CD4-positive, alpha-beta memory T cell (primary cell): ENCODE measurements at regions of chr19 and their contacts with region 1.

Region 1: DNA sequence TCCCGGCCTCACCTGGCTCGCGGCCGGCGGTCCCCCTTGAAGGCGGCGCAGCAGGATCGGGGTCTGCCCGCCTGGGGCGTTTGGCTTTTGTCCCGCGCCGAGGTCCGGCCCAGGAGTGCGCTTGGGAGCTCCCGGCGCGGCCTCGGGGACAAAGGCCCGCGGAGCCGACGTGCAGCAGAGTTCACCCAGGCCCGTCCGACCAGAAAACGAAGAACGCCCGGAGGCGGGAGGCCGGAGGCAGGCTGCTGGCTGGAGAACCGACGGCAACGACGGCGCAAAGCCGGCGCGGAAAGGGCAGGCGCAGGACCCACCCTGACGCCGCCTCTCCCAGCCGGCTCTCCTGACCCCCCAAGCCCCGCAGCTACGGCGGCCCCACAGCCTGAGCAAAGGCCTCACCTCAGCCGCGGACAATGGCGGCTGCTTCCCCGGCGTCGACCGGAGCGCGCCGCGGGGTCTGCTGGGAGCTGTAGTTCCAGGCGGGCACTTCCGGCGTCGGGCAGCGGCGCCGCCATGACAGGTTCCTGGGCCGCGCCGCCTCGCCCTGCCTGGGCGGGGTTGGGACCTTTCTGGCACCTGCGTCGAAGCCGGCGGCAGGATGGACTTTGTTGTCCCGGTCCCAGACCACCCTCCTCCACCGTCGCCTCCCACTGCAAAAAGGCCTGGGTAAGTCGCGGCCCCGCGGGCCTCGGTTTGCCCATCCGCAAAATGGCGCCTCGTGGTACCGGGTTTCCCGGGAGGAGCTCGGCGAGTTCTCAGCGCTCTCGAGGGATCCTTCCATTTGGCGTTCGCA is at the start of gene ZNF606:
- DNase-seq: peak; percentile 83 to 89 (median 86)
- H3K4me3 ChIP-seq: peak within 1 kb of the TSS; percentile 93 to 98
- H3K4me3 Mint-ChIP-seq: peak within 1 kb of the TSS; percentile 76 to 87 (median 84)
- H3K27ac ChIP-seq: peak within 1 kb of the TSS; percentile 80
- H3K27ac Mint-ChIP-seq: peak within 1 kb of the TSS; percentile 78 to 93 (median 87)
- H3K4me1 ChIP-seq: peaks cover 22% of the 10 kb centered on the region
- H3K4me1 Mint-ChIP-seq: peaks cover 15 to 34% (median 26%) of the 10 kb centered on the region in 4 donors
- H3K27me3 ChIP-seq: no peaks in the 10 kb centered on the region
- H3K27me3 Mint-ChIP-seq: no peaks in the 10 kb centered on the region
- total RNA-seq, gene ZNF606: 25.5 to 37.3 TPM

Region 2: DNA sequence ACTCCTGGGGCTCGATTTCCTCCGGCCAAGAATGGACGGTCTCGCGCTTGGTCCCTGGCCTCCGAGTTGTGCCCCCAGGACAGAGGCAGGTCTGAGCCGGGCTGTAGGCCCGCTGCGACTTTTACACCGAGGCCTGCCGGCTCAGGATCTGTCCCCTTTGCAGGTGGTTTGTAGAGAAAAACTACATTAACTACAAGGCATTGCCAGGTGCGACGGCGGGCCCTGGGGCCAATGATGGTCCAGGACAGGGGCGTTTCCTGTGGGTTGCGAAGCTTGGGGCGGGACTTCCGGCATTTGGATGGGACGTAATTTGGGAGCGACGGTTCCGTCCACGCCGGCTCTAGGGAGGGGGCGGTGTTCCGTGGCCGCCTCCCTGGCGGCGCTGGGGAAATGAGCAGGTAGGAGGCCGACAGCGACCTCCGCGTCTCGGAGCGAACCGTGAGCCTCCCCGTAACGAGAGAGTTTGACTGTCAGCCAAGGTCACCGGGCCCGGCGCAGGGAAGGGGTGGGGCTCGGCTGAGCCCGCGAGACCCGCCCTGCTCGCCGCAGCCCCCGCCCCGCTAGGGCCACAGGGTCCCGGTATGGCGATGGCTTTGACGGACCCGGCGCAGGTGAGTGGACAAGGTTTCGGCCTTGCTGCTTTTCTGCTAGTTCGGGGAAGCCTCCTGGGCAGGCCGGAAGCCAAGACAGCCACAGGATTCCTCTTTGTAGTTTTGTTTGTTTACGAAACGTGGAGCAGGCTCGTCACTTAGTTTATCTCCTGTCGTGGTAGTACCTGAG is 762.1 kb before region 1 on chr19 and contains the start of gene ZNF805:
- CTCF ChIA-PET with region 1: no interaction called
- POLR2A ChIA-PET with region 1: no interaction called
- intact Hi-C with region 1: loop called (anchors 2 kb)
- DNase-seq: peak; percentile 94 to 96 (median 96)
- H3K4me3 ChIP-seq: peak within 1 kb of the TSS; percentile 67 to 71
- H3K4me3 Mint-ChIP-seq: peak within 1 kb of the TSS; percentile 89 to 96 (median 94)
- H3K27ac ChIP-seq: peak within 1 kb of the TSS; percentile 88
- H3K27ac Mint-ChIP-seq: peak within 1 kb of the TSS; percentile 94 to 98 (median 96)
- H3K4me1 ChIP-seq: peaks cover 32% of the 10 kb centered on the region
- H3K4me1 Mint-ChIP-seq: peaks cover 15 to 51% (median 36%) of the 10 kb centered on the region in 4 donors
- H3K27me3 ChIP-seq: no peaks in the 10 kb centered on the region
- H3K27me3 Mint-ChIP-seq: no peaks in the 10 kb centered on the region
- total RNA-seq, gene ZNF805: 19.7 to 21.6 TPM

Region 3: DNA sequence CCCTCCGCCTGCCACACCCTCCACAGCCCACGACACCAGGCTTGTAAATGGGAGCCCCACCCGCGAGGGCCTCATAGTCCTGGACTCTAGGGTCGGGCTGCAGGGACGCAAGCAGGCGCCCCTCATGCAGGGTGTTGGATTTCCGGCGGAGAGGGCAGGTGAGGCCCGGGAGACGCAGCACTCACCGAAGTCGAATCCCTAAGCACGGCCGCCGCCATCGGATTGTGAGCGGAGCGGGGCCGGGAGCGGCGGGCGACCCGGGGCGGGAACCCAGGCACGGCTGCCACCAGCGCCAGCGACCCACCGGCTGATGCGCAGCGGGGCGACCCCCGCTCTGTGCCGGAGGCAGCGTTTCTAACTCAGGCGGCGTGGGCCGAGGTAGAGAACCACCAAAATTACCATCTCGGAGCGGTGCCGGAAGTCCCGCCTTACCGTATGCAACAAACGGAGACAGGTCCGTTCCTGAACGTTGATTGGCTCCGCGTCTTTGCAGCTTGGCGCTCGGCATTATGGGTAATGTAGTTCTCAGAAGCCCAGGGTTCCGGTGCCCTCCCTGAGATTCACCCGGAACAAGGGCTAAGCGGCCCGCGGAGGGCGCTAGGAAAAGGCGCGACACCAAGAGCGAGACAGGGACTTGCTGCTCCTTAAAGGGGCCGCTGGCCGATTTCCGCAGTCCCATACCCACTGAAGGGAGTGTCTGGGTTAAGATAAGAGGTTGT is 423.9 kb before region 1 on chr19 and contains the start of gene ZNF416:
- CTCF ChIA-PET with region 1: no interaction called
- POLR2A ChIA-PET with region 1: interaction called, 12 read pairs
- intact Hi-C with region 1: loop called (anchors 2 kb)
- DNase-seq: peak; percentile 94 to 98 (median 97)
- H3K4me3 ChIP-seq: peak within 1 kb of the TSS; percentile 53 to 73
- H3K4me3 Mint-ChIP-seq: peak within 1 kb of the TSS; percentile 84 to 88 (median 88)
- H3K27ac ChIP-seq: peak within 1 kb of the TSS; percentile 68
- H3K27ac Mint-ChIP-seq: peak within 1 kb of the TSS; percentile 78 to 92 (median 86)
- H3K4me1 ChIP-seq: peaks cover 24% of the 10 kb centered on the region
- H3K4me1 Mint-ChIP-seq: peaks cover 17 to 36% (median 20%) of the 10 kb centered on the region in 4 donors
- H3K27me3 ChIP-seq: no peaks in the 10 kb centered on the region
- H3K27me3 Mint-ChIP-seq: no peaks in the 10 kb centered on the region
- total RNA-seq, gene ZNF416: 12.0 to 13.9 TPM

Region 4: DNA sequence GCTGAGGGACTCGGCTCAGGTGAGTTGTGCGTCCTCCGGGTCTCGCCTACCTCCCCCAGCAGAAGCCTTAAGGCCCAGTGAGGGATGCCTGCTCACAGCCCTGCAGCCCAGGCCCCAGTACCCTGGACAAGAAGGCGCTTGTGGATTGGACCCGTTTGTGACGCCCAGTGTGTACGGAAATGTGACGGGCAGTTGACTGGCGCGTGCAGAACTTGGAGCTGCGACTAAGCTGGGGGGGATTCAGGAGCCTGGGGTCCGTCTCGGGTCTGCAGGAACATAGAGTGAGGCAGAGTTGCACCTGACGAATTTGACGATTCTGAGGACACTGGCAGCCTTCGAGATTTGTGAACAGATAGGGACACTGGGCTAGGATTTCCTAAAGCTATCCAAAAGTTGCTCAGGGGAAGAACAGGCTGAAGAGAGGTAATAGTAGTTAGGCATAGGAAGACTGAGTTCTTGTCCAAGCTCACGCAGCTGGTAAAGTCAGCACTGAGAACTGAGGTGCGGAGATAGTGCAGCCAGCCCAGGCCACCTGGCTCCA is 320.3 kb before region 1 on chr19:
- CTCF ChIA-PET with region 1: no interaction called
- POLR2A ChIA-PET with region 1: interaction called, 11 read pairs
- intact Hi-C with region 1: no loop called
- DNase-seq: no peak
- H3K4me3 ChIP-seq: peak overlapping the region; percentile 87 to 92
- H3K4me3 Mint-ChIP-seq: peak overlapping the region; percentile 96 to 99 (median 97)
- H3K27ac ChIP-seq: peak overlapping the region; percentile 54
- H3K27ac Mint-ChIP-seq: peak overlapping the region; percentile 91 to 99 (median 97)
- H3K4me1 ChIP-seq: peaks cover 18% of the 10 kb centered on the region
- H3K4me1 Mint-ChIP-seq: peaks cover 21 to 45% (median 38%) of the 10 kb centered on the region in 4 donors
- H3K27me3 ChIP-seq: no peaks in the 10 kb centered on the region
- H3K27me3 Mint-ChIP-seq: no peaks in the 10 kb centered on the region

Region 5: DNA sequence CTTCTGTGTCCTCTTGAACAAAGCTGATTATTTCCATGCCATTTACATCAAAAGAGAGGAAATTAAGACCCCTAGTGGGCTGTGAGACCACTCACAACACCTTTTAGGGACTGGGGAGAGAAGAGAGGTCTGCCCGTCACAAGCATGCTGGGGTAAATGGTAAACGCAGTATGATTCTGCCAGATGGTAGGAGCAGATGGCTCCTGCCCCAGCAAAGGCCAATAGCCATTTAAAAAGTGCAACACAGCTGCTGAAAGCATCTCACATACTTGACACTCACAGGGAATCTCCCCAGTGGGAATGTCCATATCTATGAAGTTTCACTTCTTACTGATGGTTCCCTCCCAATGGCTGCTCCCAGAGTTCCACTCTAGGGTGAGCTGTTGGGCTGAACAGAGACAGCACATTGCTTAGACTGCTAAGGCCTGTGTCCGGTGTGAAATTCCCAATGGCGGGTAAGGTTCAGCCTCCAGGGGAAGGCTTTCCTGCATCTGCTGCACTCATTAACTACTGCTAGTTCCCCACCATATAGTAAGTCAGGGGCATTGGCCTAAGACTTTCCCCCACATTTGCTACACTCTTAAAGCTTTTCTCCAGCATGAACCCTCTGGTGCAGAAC is 282.6 kb before region 1 on chr19:
- CTCF ChIA-PET with region 1: no interaction called
- POLR2A ChIA-PET with region 1: no interaction called
- intact Hi-C with region 1: no loop called
- DNase-seq: no peak
- H3K4me3 ChIP-seq: no peak overlapping the region
- H3K4me3 Mint-ChIP-seq: no peak overlapping the region
- H3K27ac ChIP-seq: no peak overlapping the region
- H3K27ac Mint-ChIP-seq: no peak overlapping the region
- H3K4me1 ChIP-seq: no peaks in the 10 kb centered on the region
- H3K4me1 Mint-ChIP-seq: peaks cover 1 to 9% (median 5%) of the 10 kb centered on the region in 4 donors
- H3K27me3 ChIP-seq: no peaks in the 10 kb centered on the region
- H3K27me3 Mint-ChIP-seq: no peaks in the 10 kb centered on the region

Region 6: DNA sequence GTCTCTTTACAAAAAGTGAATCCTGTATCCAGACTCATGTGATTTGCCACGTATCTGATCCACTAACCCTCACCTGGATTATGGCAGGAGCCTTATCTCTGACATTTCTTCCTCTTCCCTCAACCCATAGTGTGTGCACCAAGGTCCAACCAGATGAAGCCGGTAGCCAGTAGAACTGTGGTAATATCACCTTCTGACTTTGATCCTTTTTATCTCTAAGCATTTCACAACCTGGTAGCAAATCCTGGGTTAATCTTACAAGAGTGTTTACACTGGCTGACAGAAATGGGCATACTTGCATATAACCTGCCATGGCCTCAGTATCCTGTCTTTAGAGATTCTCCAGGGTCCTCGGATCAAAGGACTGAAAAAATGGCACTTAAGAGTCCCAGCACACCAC is 88.0 kb before region 1 on chr19:
- CTCF ChIA-PET with region 1: no interaction called
- POLR2A ChIA-PET with region 1: interaction called, 15 read pairs
- intact Hi-C with region 1: loop called (anchors 1 kb)
- DNase-seq: no peak
- H3K4me3 ChIP-seq: no peak overlapping the region
- H3K4me3 Mint-ChIP-seq: peak overlapping the region; percentile 53 to 99 (median 97)
- H3K27ac ChIP-seq: no peak overlapping the region
- H3K27ac Mint-ChIP-seq: peak overlapping the region in 6 of 7 donors; percentile 5 to 96 (median 34)
- H3K4me1 ChIP-seq: peaks cover 13% of the 10 kb centered on the region
- H3K4me1 Mint-ChIP-seq: peaks cover 22 to 48% (median 34%) of the 10 kb centered on the region in 4 donors
- H3K27me3 ChIP-seq: no peaks in the 10 kb centered on the region
- H3K27me3 Mint-ChIP-seq: no peaks in the 10 kb centered on the region

Region 7: DNA sequence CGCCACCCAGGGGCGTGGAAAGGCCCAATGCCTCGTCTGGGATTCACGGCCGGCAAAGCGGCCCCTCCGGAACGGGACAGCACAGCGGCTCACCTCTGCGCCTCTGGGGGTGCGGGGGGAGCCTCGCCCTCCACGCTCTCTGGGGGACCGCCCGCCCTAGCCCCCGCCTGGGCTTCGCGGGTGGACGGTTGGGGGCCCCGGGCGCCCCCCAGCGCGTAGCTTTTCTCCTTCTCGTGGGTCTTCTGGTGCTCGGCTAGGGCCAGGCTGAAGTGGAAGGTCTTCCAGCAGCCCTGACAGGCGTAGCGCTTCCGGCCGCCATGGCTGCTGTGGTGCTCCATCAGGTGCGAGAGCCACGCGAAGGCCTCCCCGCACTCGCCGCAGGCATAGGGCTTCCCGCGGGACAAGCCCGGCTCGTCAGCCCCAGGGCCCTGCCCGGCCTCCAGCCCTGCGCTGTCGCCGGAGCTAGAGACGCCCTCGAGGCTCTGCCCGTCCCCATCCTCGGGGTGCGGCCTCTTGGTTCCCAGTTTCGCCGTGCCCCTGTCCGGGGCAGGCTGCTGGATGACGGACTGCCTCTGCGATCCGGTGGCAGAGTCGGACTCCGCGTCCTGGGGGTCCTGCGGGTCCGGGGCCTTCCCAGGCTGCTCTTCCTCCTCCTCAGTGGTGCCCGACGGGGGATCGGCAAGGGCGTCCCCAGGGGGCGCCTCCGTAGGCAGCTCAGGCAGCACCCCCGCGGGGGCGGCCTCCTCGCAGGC is 82.2 kb after region 1 on chr19:
- CTCF ChIA-PET with region 1: no interaction called
- POLR2A ChIA-PET with region 1: no interaction called
- intact Hi-C with region 1: no loop called
- DNase-seq: no peak
- H3K4me3 ChIP-seq: no peak overlapping the region
- H3K4me3 Mint-ChIP-seq: no peak overlapping the region
- H3K27ac ChIP-seq: no peak overlapping the region
- H3K27ac Mint-ChIP-seq: no peak overlapping the region
- H3K4me1 ChIP-seq: no peaks in the 10 kb centered on the region
- H3K4me1 Mint-ChIP-seq: no peaks in the 10 kb centered on the region
- H3K27me3 ChIP-seq: no peaks in the 10 kb centered on the region
- H3K27me3 Mint-ChIP-seq: no peaks in the 10 kb centered on the region

Region 8: DNA sequence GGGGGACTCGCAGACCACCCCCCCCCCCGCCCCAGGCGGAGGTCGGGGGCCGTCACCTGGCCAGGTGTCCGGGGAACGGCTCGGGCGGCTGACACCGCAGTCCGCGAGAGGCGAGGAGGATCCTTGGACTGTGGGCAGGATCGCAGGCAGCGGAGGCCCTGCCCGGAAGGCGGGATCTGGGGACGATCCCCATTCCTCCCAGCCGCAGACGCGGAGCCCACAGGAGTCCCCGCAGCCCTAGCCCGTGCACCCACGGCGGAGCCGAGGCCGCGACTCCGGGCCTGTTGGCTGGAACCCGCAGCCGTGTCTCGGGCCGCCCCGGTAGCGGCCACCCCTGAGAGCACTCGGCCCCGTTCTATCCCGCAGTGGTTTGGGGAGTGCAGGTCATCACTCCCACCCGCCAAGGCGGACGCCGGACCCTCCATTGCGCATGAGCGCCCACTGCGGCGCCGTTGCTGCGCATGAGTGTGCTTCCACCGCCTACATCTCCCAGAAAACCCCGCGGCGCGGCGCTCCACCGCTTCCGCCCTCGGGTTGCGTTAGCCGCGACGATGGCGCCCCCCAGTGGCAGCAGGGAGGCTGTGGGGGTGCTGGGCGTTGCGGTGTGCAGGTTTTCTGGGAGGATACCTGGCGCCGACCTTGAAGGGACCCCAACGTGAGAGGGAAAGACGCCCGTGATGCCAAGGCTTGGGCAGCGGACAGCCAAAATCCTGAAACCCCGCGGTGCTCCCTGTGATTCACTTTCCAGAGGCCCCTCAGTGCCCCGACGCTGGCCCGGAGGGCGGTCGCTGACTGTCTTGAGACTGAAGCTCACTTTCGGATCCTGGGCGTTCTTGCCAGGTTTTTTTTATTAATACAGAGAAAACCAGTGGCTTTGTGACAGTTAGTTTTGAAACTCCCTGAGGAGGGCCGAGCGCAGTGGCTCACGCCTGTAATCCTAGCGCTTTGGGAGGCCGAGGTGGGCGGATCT is 152.4 kb after region 1 on chr19:
- CTCF ChIA-PET with region 1: no interaction called
- POLR2A ChIA-PET with region 1: interaction called, 7 read pairs
- intact Hi-C with region 1: loop called (anchors 2 kb)
- DNase-seq: peak; percentile 92 to 99 (median 96)
- H3K4me3 ChIP-seq: peak overlapping the region; percentile 88
- H3K4me3 Mint-ChIP-seq: peak overlapping the region; percentile 71 to 89 (median 84)
- H3K27ac ChIP-seq: peak overlapping the region; percentile 80
- H3K27ac Mint-ChIP-seq: peak overlapping the region; percentile 41 to 85 (median 69)
- H3K4me1 ChIP-seq: peaks cover 16% of the 10 kb centered on the region
- H3K4me1 Mint-ChIP-seq: peaks cover 5 to 24% (median 10%) of the 10 kb centered on the region in 4 donors
- H3K27me3 ChIP-seq: no peaks in the 10 kb centered on the region
- H3K27me3 Mint-ChIP-seq: no peaks in the 10 kb centered on the region